Psoas muscle (tissue), 8 donors: ENCODE measurements at regions of chr10 and their contacts with region 1.

Region 1: GRCh38 chr10:24550680-24551079 is 173.0 kb downstream of the ARHGAP21 start:
- DNase-seq: no peak
- ATAC-seq: peak in 2 of 4 donors; percentile 21
- H3K4me3 ChIP-seq: no peak overlapping the region
- H3K27ac ChIP-seq: no peak overlapping the region
- H3K4me1 ChIP-seq: no peaks in the 10 kb centered on the region
- H3K27me3 ChIP-seq: no peaks in the 10 kb centered on the region
- CTCF ChIP-seq: no peak

Region 2: DNA sequence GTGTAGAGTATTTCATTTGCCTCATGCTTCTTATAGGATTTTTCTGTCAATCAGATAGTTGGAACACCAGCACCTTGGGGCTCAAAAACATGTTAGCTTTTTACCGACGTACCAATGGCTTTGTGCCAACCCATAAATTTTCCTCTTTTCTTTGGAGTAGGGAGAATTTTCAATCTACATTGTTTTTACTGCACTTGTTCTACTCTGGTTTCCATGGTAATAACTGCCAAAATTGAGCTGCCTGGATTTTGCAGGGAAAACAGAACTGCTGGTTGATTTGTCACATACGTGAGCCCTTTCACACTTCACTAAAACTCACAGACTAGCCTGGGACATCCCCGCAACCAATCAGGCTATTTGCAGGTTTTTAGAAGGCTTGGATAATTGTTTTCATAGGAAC is 16.7 kb before region 1 on chr10:
- intact Hi-C with region 1: loop called in 1 of 2 experiments (anchors 1 kb)
- DNase-seq: no peak
- ATAC-seq: no peak
- H3K4me3 ChIP-seq: no peak overlapping the region
- H3K27ac ChIP-seq: no peak overlapping the region
- H3K4me1 ChIP-seq: no peaks in the 10 kb centered on the region
- H3K27me3 ChIP-seq: no peaks in the 10 kb centered on the region
- CTCF ChIP-seq: no peak

Region 3: DNA sequence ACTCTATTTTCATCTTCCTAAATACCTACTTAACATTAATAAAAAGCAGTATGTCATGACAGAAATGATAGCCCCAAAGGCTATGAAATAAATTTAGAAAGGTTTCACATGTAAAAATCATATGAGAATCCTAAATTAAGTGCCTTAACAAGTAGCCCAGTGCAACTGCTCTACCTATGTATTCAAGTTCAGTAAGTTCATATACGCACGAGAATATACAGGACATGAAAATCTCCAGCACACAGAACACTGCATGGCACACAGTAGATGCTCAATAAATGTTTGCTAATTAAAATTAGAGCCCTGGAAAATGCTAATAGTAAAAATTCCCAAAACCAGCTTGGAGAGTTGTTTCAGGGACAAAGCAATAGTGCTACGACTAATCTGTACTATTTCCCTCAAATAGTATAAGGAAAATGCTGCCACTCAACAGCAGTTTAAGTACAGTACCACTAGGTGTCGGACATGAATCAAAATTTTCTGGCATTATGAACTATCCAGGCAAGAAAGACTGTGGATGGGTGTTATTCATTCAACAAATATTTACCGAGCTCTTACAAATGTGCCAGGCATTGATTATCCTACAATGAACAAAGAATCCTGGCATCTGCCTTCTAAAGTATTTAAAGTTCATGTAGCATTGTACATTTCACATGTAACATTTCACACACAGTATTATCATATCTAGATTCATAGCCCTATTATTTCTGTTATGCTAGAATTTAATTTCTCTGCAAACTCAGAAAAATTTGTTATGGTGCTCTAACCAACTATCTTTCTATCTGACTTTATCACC is 92.1 kb after region 1 on chr10:
- intact Hi-C with region 1: no loop called
- DNase-seq: no peak
- ATAC-seq: peak; percentile 86 to 95 (median 90)
- H3K4me3 ChIP-seq: no peak overlapping the region
- H3K27ac ChIP-seq: no peak overlapping the region
- H3K4me1 ChIP-seq: peaks cover 19% of the 10 kb centered on the region
- H3K27me3 ChIP-seq: no peaks in the 10 kb centered on the region
- CTCF ChIP-seq: peak; percentile 83

Region 4: GRCh38 chr10:25382029-25382810 is 831.5 kb after region 1 on chr10:
- intact Hi-C with region 1: no loop called
- DNase-seq: no peak
- ATAC-seq: no peak
- H3K4me3 ChIP-seq: no peak overlapping the region
- H3K27ac ChIP-seq: no peak overlapping the region
- H3K4me1 ChIP-seq: no peaks in the 10 kb centered on the region
- H3K27me3 ChIP-seq: no peaks in the 10 kb centered on the region
- CTCF ChIP-seq: no peak